K562 (cell line): ENCODE measurements at regions of chr13 and their contacts with region 1.

Region 1: DNA sequence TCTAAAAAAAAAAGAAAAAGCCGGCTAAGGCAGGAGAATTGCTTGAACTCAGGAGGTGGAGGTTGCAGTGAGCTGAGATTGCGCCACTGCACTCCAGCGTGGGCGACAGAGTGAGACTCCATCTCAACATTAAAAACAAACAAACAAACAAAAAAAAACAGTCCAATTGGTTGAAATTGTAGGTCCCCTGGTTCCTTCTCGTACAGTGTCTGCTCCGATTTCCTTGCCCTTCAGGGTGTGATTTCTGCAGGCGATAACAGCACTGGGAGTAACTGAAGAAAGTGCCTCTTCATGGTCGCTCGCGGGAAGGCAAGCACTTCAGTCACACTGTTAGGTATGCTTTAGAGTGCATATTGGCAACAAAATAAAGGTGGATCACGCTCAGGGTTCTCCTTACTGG is 39.7 kb downstream of the TPT1 start:
- DNase-seq: peak in 2 of 4 experiments; percentile 38 to 50
- ATAC-seq: peak; percentile 81
- H3K4me3 ChIP-seq: no peak overlapping the region
- H3K27ac ChIP-seq: no peak overlapping the region; the same call in 2 of the 3 replicates
- H3K4me1 ChIP-seq: peaks cover 16 to 21% of the 10 kb centered on the region in 2 experiments; a peak in 4 of 5 replicates
- H3K27me3 ChIP-seq: no peaks in the 10 kb centered on the region
- CTCF ChIP-seq: no peak
- EP300 ChIP-seq: no peak
- POLR2A ChIP-seq: no peak
- RAD21 ChIP-seq: no peak

Region 2: GRCh38 chr13:45194081-45194939 is 106.9 kb before region 1 on chr13:
- CTCF ChIA-PET with region 1: no interaction called
- POLR2A ChIA-PET with region 1: interaction called, 3 read pairs
- in situ Hi-C with region 1: no loop called
- intact Hi-C with region 1: loop called (anchors 10 kb)
- DNase-seq: no peak
- ATAC-seq: peak; percentile 54; the same call in 1 of the 3 replicates
- H3K4me3 ChIP-seq: no peak overlapping the region
- H3K27ac ChIP-seq: no peak overlapping the region
- H3K4me1 ChIP-seq: peaks cover 0 to 5% of the 10 kb centered on the region in 2 experiments; a peak in 2 of 5 replicates
- H3K27me3 ChIP-seq: no peaks in the 10 kb centered on the region
- CTCF ChIP-seq: peak in 2 of 3 experiments; percentile 25 to 33; a peak in 2 of 6 replicates
- EP300 ChIP-seq: no peak
- POLR2A ChIP-seq: no peak
- RAD21 ChIP-seq: 0 out of 4 replicates have a peak, but pooled peaks of 1 of the 2 experiments have one; percentile 2

Region 3: GRCh38 chr13:45332036-45332830 is 31.0 kb after region 1 on chr13:
- CTCF ChIA-PET with region 1: no interaction called
- POLR2A ChIA-PET with region 1: no interaction called
- in situ Hi-C with region 1: no loop called
- intact Hi-C with region 1: no loop called
- DNase-seq: peak in 1 of 4 experiments; percentile 60
- ATAC-seq: peak; percentile 11
- H3K4me3 ChIP-seq: no peak overlapping the region
- H3K27ac ChIP-seq: no peak overlapping the region
- H3K4me1 ChIP-seq: peaks cover 13 to 18% of the 10 kb centered on the region in 2 experiments
- H3K27me3 ChIP-seq: no peaks in the 10 kb centered on the region
- CTCF ChIP-seq: no peak
- EP300 ChIP-seq: no peak
- POLR2A ChIP-seq: peak; percentile 45; the same call in 1 of the 2 replicates
- RAD21 ChIP-seq: no peak

Region 4: GRCh38 chr13:45370922-45371406 is 69.7 kb after region 1 on chr13:
- CTCF ChIA-PET with region 1: no interaction called
- POLR2A ChIA-PET with region 1: no interaction called
- in situ Hi-C with region 1: no loop called
- intact Hi-C with region 1: no loop called
- DNase-seq: peak; percentile 66 to 76 (median 74)
- ATAC-seq: peak; percentile 87
- H3K4me3 ChIP-seq: no peak overlapping the region
- H3K27ac ChIP-seq: no peak overlapping the region
- H3K4me1 ChIP-seq: peaks cover 9 to 17% of the 10 kb centered on the region in 2 experiments; a peak in 4 of 5 replicates
- H3K27me3 ChIP-seq: no peaks in the 10 kb centered on the region
- CTCF ChIP-seq: peak; percentile 79 to 86 (median 83)
- EP300 ChIP-seq: no peak
- POLR2A ChIP-seq: no peak
- RAD21 ChIP-seq: peak; percentile 57 to 78

Region 5: DNA sequence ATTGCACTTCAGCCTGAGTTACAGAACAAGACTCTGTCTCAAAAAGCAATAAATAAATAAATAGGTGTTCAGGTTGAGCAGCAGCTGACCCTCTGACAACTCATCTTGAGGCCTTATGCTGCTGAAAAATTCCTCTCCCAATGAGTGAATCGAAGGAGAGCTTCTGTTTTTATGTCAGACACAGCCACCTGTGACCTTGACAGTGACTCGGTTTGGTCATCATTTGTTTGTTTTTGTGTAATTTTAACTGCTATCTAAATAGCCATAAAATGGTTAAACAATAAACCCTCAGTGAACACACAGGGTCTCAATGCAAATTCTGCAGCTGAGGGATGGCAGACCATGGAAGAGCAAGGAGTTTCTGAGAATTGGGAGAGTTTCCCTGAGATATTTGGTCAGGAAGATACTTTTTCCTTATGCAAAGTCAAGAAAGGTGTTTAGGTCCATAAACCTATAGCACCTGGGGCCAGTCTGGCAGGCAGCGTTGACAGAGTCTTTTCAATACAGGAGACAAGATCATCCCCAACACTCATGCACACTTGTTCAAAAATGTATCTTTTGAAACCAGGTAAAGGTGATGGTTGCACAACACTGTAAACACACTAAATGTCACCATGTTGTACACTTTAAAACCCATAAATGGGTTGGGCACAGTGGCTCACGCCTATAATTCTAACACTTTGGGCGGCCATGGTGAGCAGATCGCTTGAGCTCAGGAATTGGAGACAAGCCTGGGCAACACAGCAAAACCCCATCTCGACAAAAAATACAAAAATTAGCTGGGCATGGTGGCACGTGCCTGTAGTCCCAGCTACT is 133.5 kb after region 1 on chr13:
- CTCF ChIA-PET with region 1: no interaction called
- POLR2A ChIA-PET with region 1: no interaction called
- in situ Hi-C with region 1: no loop called
- intact Hi-C with region 1: no loop called
- DNase-seq: no peak
- ATAC-seq: no peak
- H3K4me3 ChIP-seq: no peak overlapping the region
- H3K27ac ChIP-seq: no peak overlapping the region
- H3K4me1 ChIP-seq: peaks cover 0 to 4% of the 10 kb centered on the region in 2 experiments; a peak in 1 of 5 replicates
- H3K27me3 ChIP-seq: no peaks in the 10 kb centered on the region
- CTCF ChIP-seq: no peak
- EP300 ChIP-seq: no peak
- POLR2A ChIP-seq: no peak
- RAD21 ChIP-seq: no peak